ENCODE measurements at regions of chr12 and their contacts with region 1.

Region 1: GRCh38 chr12:45728630-45729232 is 775 bp upstream of the ARID2 start:
- DNase-seq: peak; percentile 98
- H3K4me3 Mint-ChIP-seq: peak overlapping the region; percentile 100
- H3K27ac Mint-ChIP-seq: peak overlapping the region; percentile 98
- H3K4me1 Mint-ChIP-seq: peaks cover 22% of the 10 kb centered on the region
- H3K27me3 Mint-ChIP-seq: no peaks in the 10 kb centered on the region

Region 2: GRCh38 chr12:45425426-45425825 is 303.3 kb before region 1 on chr12:
- CTCF ChIA-PET with region 1: no interaction called
- DNase-seq: no peak
- H3K4me3 Mint-ChIP-seq: no peak overlapping the region
- H3K27ac Mint-ChIP-seq: no peak overlapping the region
- H3K4me1 Mint-ChIP-seq: no peaks in the 10 kb centered on the region
- H3K27me3 Mint-ChIP-seq: no peaks in the 10 kb centered on the region

Region 3: DNA sequence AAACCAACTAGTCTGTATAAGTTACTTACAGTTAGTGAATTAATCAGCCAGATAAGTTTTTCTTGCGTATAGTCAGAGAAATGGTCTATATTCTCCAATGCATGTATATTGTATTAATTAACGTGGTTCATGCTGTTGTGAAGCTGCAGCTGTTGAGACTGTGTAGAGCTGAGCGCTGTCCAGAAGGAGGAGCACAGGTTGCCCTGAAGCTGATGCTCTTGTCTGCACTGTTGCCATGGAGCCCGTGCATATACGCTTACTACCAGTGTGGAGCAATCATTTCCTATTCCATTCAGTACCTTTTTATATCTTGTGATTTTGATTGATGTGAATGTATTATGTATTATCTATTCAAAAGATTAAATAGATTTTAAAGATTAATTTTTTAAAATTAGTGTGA is 73.5 kb before region 1 on chr12:
- CTCF ChIA-PET with region 1: interaction called, 49 read pairs
- DNase-seq: peak; percentile 78
- H3K4me3 Mint-ChIP-seq: no peak overlapping the region
- H3K27ac Mint-ChIP-seq: no peak overlapping the region
- H3K4me1 Mint-ChIP-seq: peaks cover 15% of the 10 kb centered on the region
- H3K27me3 Mint-ChIP-seq: peaks cover 19% of the 10 kb centered on the region

Region 4: DNA sequence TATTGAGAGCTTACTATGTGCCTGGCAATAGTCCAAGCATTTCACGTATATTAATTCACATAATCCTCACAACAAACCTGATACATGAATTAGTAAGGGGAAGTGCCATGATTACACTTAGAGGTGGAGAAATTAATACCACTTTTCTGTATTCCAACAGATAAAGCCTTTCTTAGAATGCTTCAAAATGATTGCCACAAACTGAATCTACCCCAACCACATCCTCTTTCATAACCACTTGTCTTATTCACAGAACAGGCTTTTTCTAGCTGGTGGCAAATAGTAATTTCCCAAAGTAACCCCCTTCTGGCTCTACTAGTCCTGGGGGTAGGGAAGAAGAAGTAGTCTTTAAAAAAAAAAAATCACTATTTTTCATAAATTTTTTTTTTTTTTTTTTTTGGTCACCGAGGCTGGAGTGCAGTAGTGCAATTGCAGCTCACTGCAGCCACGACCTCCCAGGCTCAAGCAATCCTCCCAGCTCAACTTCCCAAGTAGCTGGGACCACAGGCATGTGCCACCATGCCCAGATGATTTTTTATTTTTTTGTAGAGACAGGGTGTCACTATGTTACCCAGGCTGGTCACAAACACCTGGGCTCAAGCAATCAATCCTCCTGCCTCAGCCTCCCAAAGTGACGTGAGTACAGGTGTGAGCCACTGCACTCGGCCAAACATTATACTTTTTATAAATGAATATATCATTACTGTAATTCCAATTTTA is 58.2 kb before region 1 on chr12:
- CTCF ChIA-PET with region 1: interaction called, 26 read pairs
- DNase-seq: no peak
- H3K4me3 Mint-ChIP-seq: peak overlapping the region; percentile 1
- H3K27ac Mint-ChIP-seq: peak overlapping the region; percentile 53
- H3K4me1 Mint-ChIP-seq: peaks cover 47% of the 10 kb centered on the region
- H3K27me3 Mint-ChIP-seq: peaks cover 6% of the 10 kb centered on the region

Region 5: GRCh38 chr12:45688183-45688582 is 40.5 kb before region 1 on chr12:
- CTCF ChIA-PET with region 1: no interaction called
- DNase-seq: no peak
- H3K4me3 Mint-ChIP-seq: no peak overlapping the region
- H3K27ac Mint-ChIP-seq: no peak overlapping the region
- H3K4me1 Mint-ChIP-seq: peaks cover 20% of the 10 kb centered on the region
- H3K27me3 Mint-ChIP-seq: peaks cover 12% of the 10 kb centered on the region

Region 6: GRCh38 chr12:45745861-45746277 is 17.1 kb after region 1 on chr12:
- CTCF ChIA-PET with region 1: interaction called, 10 read pairs
- DNase-seq: no peak
- H3K4me3 Mint-ChIP-seq: no peak overlapping the region
- H3K27ac Mint-ChIP-seq: no peak overlapping the region
- H3K4me1 Mint-ChIP-seq: peaks cover 34% of the 10 kb centered on the region
- H3K27me3 Mint-ChIP-seq: no peaks in the 10 kb centered on the region

Region 7: GRCh38 chr12:45828402-45828801 is 99.7 kb after region 1 on chr12:
- CTCF ChIA-PET with region 1: no interaction called
- DNase-seq: no peak
- H3K4me3 Mint-ChIP-seq: no peak overlapping the region
- H3K27ac Mint-ChIP-seq: no peak overlapping the region
- H3K4me1 Mint-ChIP-seq: no peaks in the 10 kb centered on the region
- H3K27me3 Mint-ChIP-seq: no peaks in the 10 kb centered on the region

Measured in activated naive CD4-positive, alpha-beta T cell treated with anti-CD3 and anti-CD28 coated beads, Interleukin-2, amount 10 ng/mL, durations not matched to agents 7 days and 5 days (primary cell).